Activated CD4-positive, alpha-beta memory T cell treated with anti-CD3 and anti-CD28 coated beads for 36 hours (primary cell): ENCODE measurements at regions of chr10 and their contacts with region 1.

Region 1: GRCh38 chr10:69786791-69787190 is 14.9 kb upstream of the COL13A1 start:
- DNase-seq: no peak
- H3K4me3 Mint-ChIP-seq: no peak overlapping the region
- H3K27ac Mint-ChIP-seq: no peak overlapping the region
- H3K4me1 Mint-ChIP-seq: no peaks in the 10 kb centered on the region
- H3K27me3 Mint-ChIP-seq: peaks cover 14% of the 10 kb centered on the region

Region 2: DNA sequence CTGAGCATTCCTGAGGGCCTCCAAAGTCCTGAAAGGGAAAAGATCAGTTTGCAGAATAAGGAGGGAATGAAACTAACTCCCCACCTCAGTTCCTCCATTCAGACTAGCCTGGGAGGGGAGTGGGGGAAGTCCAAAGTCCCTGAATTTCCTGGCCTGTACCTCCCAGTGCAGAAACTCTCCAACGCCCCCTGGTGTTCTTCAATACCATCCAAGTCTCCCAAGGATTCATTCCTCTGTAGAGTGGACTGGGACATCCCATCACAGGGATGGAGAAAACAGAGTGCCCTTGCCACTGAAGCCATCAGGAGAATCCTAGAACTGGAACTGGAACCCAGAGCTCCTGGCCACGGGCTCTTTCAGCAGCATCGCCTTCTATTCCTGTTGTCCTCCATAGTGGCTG is 13.3 kb after region 1 on chr10:
- CTCF ChIA-PET with region 1: interaction called, 15 read pairs
- POLR2A ChIA-PET with region 1: no interaction called
- intact Hi-C with region 1: no loop called
- DNase-seq: no peak
- H3K4me3 Mint-ChIP-seq: no peak overlapping the region
- H3K27ac Mint-ChIP-seq: no peak overlapping the region
- H3K4me1 Mint-ChIP-seq: peaks cover 11% of the 10 kb centered on the region
- H3K27me3 Mint-ChIP-seq: peaks cover 49% of the 10 kb centered on the region

Region 3: GRCh38 chr10:69957886-69958555 is 171.2 kb after region 1 on chr10:
- CTCF ChIA-PET with region 1: interaction called, 14 read pairs
- POLR2A ChIA-PET with region 1: no interaction called
- intact Hi-C with region 1: no loop called
- DNase-seq: peak; percentile 21
- H3K4me3 Mint-ChIP-seq: no peak overlapping the region
- H3K27ac Mint-ChIP-seq: no peak overlapping the region
- H3K4me1 Mint-ChIP-seq: no peaks in the 10 kb centered on the region
- H3K27me3 Mint-ChIP-seq: peaks cover 9% of the 10 kb centered on the region